Dendritic cell treated with granulocyte-macrophage colony-stimulating factor and Interleukin-4, amounts not matched to agents 40 ng/mL and 50 ng/mL, for 4 days (primary cell): ENCODE measurements at regions of chr10 and their contacts with region 1.

Region 1: GRCh38 chr10:27155066-27155754 is at the start of gene MASTL:
- H3K4me3 Mint-ChIP-seq: peak within 1 kb of the TSS; percentile 89
- H3K27ac Mint-ChIP-seq: peak within 1 kb of the TSS; percentile 95
- H3K4me1 Mint-ChIP-seq: peaks cover 48% of the 10 kb centered on the region
- H3K27me3 Mint-ChIP-seq: no peaks in the 10 kb centered on the region

Region 2: GRCh38 chr10:26854524-26854923 is 300.7 kb before region 1 on chr10:
- intact Hi-C with region 1: no loop called
- H3K4me3 Mint-ChIP-seq: no peak overlapping the region
- H3K27ac Mint-ChIP-seq: no peak overlapping the region
- H3K4me1 Mint-ChIP-seq: peaks cover 46% of the 10 kb centered on the region
- H3K27me3 Mint-ChIP-seq: no peaks in the 10 kb centered on the region

Region 3: GRCh38 chr10:27099916-27100812 is 55.0 kb before region 1 on chr10 and contains the start of gene ANKRD26:
- intact Hi-C with region 1: loop called (anchors 5 kb)
- H3K4me3 Mint-ChIP-seq: peak within 1 kb of the TSS; percentile 95
- H3K27ac Mint-ChIP-seq: peak within 1 kb of the TSS; percentile 97
- H3K4me1 Mint-ChIP-seq: peaks cover 16% of the 10 kb centered on the region
- H3K27me3 Mint-ChIP-seq: no peaks in the 10 kb centered on the region

Region 4: DNA sequence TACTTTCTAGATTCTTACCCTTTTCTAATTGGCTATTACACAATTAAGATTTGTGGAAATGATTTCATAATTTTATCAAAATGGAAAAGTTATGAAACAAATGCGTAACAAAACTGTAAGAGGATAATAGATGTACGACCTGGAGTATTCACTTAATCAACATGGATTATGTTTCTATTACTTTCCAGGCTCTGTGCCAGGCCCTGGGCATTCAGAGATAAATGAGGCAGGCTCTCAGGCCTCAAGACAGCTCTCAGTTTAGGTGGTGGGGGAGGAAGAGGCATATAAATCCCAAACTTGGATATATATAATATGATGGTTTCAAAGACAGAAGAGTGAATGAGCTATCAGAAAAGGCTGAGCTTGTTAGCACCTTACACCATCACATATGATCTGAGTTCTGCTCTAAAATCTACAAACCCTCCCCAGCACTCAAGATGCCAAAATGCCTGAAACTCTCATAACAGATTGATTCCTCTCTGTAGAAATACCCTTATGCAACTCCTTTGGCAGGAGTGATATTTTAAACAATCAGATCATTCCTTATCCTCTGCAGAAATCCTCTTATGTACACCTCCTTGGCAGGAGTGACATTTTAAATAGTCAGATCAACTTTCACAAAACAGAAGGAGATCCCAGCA is 42.9 kb after region 1 on chr10:
- intact Hi-C with region 1: no loop called
- H3K4me3 Mint-ChIP-seq: no peak overlapping the region
- H3K27ac Mint-ChIP-seq: no peak overlapping the region
- H3K4me1 Mint-ChIP-seq: no peaks in the 10 kb centered on the region
- H3K27me3 Mint-ChIP-seq: no peaks in the 10 kb centered on the region

Region 5: GRCh38 chr10:27241652-27242472 is 86.7 kb after region 1 on chr10:
- intact Hi-C with region 1: loop called (anchors 1 kb)
- H3K4me3 Mint-ChIP-seq: peak overlapping the region; percentile 83
- H3K27ac Mint-ChIP-seq: peak overlapping the region; percentile 96
- H3K4me1 Mint-ChIP-seq: peaks cover 33% of the 10 kb centered on the region
- H3K27me3 Mint-ChIP-seq: no peaks in the 10 kb centered on the region